Activated CD4-positive, alpha-beta memory T cell treated with anti-CD3 and anti-CD28 coated beads, Interleukin-2, amount 10 ng/mL, durations not matched to agents 7 days and 5 days (primary cell): ENCODE measurements at regions of chr7 and their contacts with region 1.

Region 1: GRCh38 chr7:158704704-158705468 is at the start of gene NCAPG2:
- DNase-seq: peak; percentile 98
- H3K4me3 Mint-ChIP-seq: peak within 1 kb of the TSS; percentile 93
- H3K27ac Mint-ChIP-seq: peak within 1 kb of the TSS; percentile 87
- H3K4me1 Mint-ChIP-seq: peaks cover 54% of the 10 kb centered on the region
- H3K27me3 Mint-ChIP-seq: no peaks in the 10 kb centered on the region
- total RNA-seq, gene NCAPG2: 151 TPM

Region 2: DNA sequence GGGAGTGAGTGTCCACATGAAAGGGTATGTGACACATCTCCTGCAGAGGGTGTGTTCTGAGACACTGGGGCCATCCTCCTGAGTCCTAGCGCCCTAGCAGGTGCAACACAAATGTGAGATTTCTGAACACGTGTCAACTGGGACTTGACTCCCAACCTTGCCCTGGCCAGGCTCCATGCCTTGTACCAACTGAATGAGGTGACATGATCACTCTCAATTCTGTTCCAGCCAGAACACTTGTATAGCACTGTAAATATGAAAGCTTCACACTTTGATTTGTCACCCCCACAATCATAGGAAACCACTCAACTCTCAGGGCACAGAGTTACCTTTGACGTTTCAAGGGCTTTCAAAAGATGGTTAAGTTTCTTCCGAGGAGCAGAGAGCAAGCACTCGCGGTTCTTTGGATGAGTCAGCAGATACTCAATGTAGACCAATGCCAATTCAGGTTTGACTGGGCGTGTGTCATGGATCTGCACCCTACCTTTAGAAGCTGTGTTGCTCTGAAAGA is 48.9 kb before region 1 on chr7:
- CTCF ChIA-PET with region 1: no interaction called
- POLR2A ChIA-PET with region 1: interaction called, 15 read pairs
- DNase-seq: peak; percentile 78
- H3K4me3 Mint-ChIP-seq: peak overlapping the region; percentile 31
- H3K27ac Mint-ChIP-seq: peak overlapping the region; percentile 92
- H3K4me1 Mint-ChIP-seq: peaks cover 36% of the 10 kb centered on the region
- H3K27me3 Mint-ChIP-seq: no peaks in the 10 kb centered on the region

Region 3: GRCh38 chr7:158802473-158803202 is 97.8 kb after region 1 on chr7:
- CTCF ChIA-PET with region 1: no interaction called
- POLR2A ChIA-PET with region 1: no interaction called
- DNase-seq: no peak
- H3K4me3 Mint-ChIP-seq: no peak overlapping the region
- H3K27ac Mint-ChIP-seq: peak overlapping the region; percentile 72
- H3K4me1 Mint-ChIP-seq: peaks cover 45% of the 10 kb centered on the region
- H3K27me3 Mint-ChIP-seq: no peaks in the 10 kb centered on the region

Region 4: GRCh38 chr7:158818325-158819213 is 113.7 kb after region 1 on chr7:
- CTCF ChIA-PET with region 1: interaction called, 5 read pairs
- POLR2A ChIA-PET with region 1: interaction called, 21 read pairs
- DNase-seq: peak; percentile 83
- H3K4me3 Mint-ChIP-seq: peak overlapping the region; percentile 87
- H3K27ac Mint-ChIP-seq: peak overlapping the region; percentile 92
- H3K4me1 Mint-ChIP-seq: peaks cover 91% of the 10 kb centered on the region
- H3K27me3 Mint-ChIP-seq: no peaks in the 10 kb centered on the region

Region 5: DNA sequence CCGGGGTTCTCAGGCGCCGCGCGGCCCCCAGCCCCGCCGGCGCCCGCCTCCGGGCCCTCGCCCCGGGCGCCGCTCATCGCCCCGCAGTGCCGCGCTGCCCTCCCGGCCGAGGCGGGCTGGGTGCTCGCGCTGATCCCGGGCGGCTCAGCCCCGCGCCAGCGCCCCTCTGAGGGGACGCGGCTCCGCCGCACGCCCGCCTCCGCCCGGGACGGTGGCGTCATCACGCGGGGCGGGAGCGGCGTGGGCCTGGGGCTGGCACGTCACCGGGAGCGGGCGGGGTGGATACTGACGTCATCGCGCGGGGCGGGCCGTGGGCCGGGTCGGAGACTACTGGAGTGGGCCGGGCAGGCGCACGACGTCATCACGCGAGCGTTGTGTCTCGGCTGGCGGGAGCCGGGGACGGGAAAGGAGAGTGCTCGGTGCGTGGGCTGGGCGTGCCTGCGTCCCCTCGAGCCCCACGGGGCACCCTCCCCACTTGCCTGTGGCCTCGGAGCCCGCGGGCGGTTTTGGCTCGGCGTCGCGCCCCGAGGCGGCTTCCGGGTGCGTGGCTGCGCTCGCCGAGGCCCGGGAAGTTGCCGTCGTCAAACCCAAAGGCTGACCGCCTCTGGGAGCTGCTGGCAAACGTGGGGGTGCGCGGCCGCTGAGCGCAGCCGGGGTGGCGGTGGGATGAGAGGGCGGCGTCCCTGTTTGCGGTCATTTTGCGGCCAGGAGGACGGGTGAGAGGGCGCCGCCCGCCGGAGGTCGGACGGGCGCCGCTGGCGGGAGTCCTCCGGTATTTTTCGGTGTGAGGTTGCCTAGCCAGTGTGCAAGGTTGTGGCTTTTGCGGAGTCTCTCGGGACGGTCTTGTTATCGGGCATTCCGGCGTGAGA is 124.7 kb after region 1 on chr7 and contains the start of gene ESYT2:
- CTCF ChIA-PET with region 1: interaction called, 5 read pairs
- POLR2A ChIA-PET with region 1: interaction called, 21 read pairs
- DNase-seq: peak; percentile 98
- H3K4me3 Mint-ChIP-seq: peak within 1 kb of the TSS; percentile 93
- H3K27ac Mint-ChIP-seq: peak within 1 kb of the TSS; percentile 91
- H3K4me1 Mint-ChIP-seq: peaks cover 38% of the 10 kb centered on the region
- H3K27me3 Mint-ChIP-seq: peaks cover 11% of the 10 kb centered on the region
- total RNA-seq, gene ESYT2: 128 to 133 TPM

Region 6: DNA sequence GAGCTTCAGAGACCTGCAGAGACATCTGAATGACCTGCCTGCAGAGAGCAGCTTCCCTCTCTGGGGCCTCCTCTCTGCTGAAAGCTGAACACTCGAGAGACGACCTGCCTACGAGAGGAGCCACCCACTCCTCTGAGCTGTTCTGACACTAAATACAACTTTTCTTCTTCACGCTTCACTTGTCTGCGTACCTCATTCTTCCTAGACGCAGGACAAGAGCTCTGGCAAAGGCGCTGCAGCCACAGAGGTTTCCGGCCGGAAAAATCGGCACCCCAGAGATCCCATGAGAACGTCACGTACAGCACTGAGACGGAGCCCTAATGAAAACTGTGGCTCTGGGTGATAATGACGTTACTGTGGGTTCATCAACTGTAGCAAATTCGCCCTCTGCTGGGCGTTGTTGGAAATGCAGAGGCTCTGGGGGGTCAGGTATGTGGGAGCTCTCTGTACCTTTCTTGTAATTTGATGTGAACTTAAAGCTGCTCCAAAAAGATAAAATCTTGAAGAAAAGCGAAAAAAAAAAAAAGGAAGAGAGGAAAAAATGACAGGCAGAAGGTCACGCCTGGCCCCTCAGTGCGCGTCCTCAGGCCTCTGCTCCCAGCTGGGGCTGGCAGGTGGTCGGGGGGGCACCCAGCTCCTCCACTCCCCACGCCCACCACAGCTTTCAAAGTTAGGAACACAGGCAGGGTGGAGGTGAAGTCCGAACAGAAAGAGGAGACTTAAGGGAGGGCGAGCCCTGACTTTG is 272.1 kb after region 1 on chr7:
- CTCF ChIA-PET with region 1: interaction called, 17 read pairs
- POLR2A ChIA-PET with region 1: interaction called, 13 read pairs
- DNase-seq: peak; percentile 90
- H3K4me3 Mint-ChIP-seq: peak overlapping the region; percentile 77
- H3K27ac Mint-ChIP-seq: peak overlapping the region; percentile 78
- H3K4me1 Mint-ChIP-seq: peaks cover 20% of the 10 kb centered on the region
- H3K27me3 Mint-ChIP-seq: no peaks in the 10 kb centered on the region